ENCODE measurements at regions of chr7 and their contacts with region 1.

Region 1: DNA sequence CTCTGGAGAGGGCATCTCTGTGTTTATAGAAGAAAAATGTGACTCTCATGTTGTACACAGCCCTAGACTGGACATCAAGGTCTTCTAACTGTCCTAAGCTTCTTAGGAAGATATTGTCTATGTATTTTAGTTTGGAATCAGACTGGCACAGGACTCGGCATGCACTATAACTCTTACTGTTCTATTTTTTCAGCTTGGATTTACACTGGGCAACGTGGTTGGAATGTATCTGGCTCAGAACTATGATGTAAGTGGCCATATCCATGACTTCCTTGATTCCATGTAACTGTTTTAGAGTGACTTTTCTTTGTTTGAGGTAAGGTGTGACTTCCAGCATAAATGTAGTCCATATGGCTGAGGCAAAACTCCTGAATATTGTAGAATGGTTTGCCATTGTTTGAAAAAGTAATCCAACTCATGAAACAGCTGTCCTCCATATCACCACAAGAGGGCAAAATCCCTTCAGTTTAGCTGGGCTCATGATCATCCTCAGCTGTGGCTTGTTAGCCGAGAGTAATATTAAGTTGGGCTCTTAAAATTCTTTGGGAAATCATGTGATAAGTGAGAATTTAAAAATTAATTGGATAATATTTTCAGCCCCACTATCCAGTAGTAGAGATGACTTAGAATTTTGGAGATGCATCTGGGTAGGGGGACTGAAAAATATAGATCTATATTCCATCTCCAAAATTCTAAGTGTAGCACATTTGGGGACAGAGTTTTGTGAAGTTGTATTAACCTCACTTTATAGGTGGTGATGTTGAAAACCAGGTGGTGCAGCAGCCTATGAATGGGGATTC is 10.4 kb downstream of the STMP1 start:
- DNase-seq: no peak

Region 2: GRCh38 chr7:135745703-135746312 is 73.0 kb after region 1 on chr7:
- intact Hi-C with region 1: loop called (anchors 5 kb)
- DNase-seq: no peak

Region 3: GRCh38 chr7:135756191-135756590 is 83.4 kb after region 1 on chr7:
- intact Hi-C with region 1: no loop called
- DNase-seq: no peak

Region 4: GRCh38 chr7:135795846-135796570 is 123.2 kb after region 1 on chr7:
- intact Hi-C with region 1: loop called (anchors 2 kb)
- DNase-seq: no peak

Region 5: DNA sequence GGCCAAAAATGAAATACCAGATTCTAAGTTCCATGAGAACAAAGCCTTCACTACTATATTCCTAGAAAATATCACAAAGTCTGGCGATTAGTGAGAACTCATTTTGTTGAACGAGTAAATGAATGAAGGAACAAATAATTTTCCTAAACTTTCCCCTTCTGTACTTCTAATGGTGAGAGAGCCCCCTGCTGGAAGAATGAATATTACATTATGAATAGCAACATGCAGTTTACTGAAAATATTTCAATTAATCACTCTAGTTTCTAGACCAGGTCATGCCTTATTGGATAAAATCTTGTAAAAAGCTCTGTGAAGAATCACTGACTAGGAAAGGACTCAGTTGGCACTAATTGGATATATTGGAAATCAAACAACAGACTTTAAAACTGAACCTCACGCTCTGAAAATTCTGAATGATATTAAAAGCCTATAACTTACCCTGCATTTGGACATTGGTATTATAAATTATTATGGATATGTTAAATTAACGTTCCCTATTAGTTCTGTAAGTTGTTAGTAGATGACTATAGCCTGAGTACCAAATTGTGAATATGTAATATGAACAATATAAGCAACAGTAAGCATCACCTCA is 336.8 kb after region 1 on chr7:
- intact Hi-C with region 1: loop called (anchors 5 kb)
- DNase-seq: no peak